Activated naive CD4-positive, alpha-beta T cell treated with anti-CD3 and anti-CD28 coated beads for 36 hours (primary cell): ENCODE measurements at regions of chr18 and their contacts with region 1.

Region 1: GRCh38 chr18:11733031-11733430 is 44.0 kb downstream of the GNAL start:
- DNase-seq: peak; percentile 79
- H3K4me3 Mint-ChIP-seq: no peak overlapping the region
- H3K27ac Mint-ChIP-seq: no peak overlapping the region
- H3K4me1 Mint-ChIP-seq: peaks cover 2% of the 10 kb centered on the region
- H3K27me3 Mint-ChIP-seq: peaks cover 20% of the 10 kb centered on the region

Region 2: GRCh38 chr18:11654736-11655605 is 78.1 kb before region 1 on chr18:
- CTCF ChIA-PET with region 1: interaction called, 16 read pairs
- intact Hi-C with region 1: loop called (anchors 1 kb)
- DNase-seq: peak; percentile 71
- H3K4me3 Mint-ChIP-seq: no peak overlapping the region
- H3K27ac Mint-ChIP-seq: no peak overlapping the region
- H3K4me1 Mint-ChIP-seq: peaks cover 6% of the 10 kb centered on the region
- H3K27me3 Mint-ChIP-seq: peaks cover 39% of the 10 kb centered on the region

Region 3: DNA sequence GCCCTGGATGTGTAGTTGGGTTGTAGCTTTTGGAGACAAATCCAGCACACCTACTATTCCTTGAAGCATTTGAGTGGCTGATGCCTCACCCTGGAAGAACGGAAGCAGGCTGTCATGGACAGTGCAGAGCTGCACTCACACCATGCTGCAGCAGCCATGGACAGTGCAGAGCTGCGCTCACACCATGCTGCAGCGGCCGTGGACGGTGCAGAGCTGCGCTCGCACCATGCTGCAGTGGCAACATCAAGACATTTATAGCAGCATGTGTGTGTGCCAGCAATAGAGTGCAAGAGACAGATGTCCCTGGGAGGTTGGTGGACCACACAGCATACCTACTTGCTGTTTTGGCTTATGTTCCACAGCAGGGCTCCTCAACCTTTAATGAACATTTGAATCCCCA is 13.4 kb before region 1 on chr18:
- CTCF ChIA-PET with region 1: interaction called, 11 read pairs
- intact Hi-C with region 1: no loop called
- DNase-seq: no peak
- H3K4me3 Mint-ChIP-seq: no peak overlapping the region
- H3K27ac Mint-ChIP-seq: no peak overlapping the region
- H3K4me1 Mint-ChIP-seq: peaks cover 2% of the 10 kb centered on the region
- H3K27me3 Mint-ChIP-seq: peaks cover under 1% of the 10 kb centered on the region

Region 4: DNA sequence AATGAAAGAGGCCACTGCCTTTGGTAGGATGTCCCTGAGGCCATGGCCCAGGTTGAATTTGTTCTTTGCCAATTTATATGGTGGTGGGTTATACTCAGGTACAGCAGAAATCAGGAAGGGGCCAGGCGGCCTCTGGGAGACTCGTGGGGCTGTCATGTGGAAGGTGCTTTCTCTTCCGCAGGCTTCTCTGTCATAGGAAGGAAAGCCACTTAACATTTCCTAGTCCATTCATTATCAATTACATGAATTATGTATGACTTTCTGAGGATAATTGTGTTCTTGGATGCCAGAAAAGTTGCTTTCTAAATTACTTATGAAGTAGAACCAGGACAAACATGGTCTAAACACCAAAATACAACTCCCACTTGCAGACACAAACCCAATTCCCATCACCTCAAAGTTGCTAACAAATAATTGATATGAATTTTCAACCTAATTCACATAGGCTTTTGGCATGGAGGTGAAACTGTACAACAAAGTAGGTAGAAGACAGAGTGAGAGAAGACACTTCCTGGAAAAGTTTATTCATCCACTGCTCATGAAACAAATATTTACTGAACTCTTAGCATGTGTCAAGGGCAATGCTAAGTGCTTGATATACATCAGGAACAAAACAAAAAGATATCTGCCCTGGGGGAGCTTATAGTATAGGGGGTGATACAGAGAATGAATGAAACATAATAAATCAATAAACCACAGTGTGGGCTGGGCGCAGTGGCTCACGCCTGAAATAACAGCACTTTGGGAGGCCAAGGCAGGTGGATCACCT is 67.7 kb after region 1 on chr18:
- CTCF ChIA-PET with region 1: no interaction called
- intact Hi-C with region 1: no loop called
- DNase-seq: no peak
- H3K4me3 Mint-ChIP-seq: no peak overlapping the region
- H3K27ac Mint-ChIP-seq: no peak overlapping the region
- H3K4me1 Mint-ChIP-seq: no peaks in the 10 kb centered on the region
- H3K27me3 Mint-ChIP-seq: peaks cover 8% of the 10 kb centered on the region

Region 5: DNA sequence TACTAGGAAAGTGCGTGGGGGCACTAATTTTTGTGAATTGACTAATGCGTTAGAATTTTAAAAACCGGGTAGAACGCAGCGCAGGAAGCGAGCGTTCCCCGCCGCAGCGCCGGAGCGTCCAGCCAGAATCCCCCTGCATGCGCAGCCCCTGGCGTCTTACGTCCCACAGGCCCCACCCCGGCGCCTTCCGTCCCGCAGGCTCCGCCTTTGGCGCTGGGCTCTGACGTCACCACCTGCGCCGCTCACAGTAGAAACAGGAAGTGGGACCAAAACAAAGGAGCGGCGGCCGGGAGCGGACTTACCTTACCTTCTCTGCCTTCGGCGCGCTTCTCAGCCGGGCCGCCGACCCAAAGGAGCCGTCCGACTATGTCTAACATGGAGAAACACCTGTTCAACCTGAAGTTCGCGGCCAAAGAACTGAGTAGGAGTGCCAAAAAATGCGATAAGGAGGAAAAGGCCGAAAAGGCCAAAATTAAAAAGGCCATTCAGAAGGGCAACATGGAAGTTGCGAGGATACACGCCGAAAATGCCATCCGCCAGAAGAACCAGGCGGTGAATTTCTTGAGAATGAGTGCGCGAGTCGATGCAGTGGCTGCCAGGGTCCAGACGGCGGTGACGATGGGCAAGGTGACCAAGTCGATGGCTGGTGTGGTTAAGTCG is 118.2 kb after region 1 on chr18 and contains the start of gene CHMP1B:
- CTCF ChIA-PET with region 1: interaction called, 4 read pairs
- intact Hi-C with region 1: loop called (anchors 1 kb)
- DNase-seq: peak; percentile 98
- H3K4me3 Mint-ChIP-seq: peak within 1 kb of the TSS; percentile 100
- H3K27ac Mint-ChIP-seq: peak within 1 kb of the TSS; percentile 100
- H3K4me1 Mint-ChIP-seq: peaks cover 31% of the 10 kb centered on the region
- H3K27me3 Mint-ChIP-seq: no peaks in the 10 kb centered on the region
- total RNA-seq, gene CHMP1B: 23.2 TPM

Region 6: DNA sequence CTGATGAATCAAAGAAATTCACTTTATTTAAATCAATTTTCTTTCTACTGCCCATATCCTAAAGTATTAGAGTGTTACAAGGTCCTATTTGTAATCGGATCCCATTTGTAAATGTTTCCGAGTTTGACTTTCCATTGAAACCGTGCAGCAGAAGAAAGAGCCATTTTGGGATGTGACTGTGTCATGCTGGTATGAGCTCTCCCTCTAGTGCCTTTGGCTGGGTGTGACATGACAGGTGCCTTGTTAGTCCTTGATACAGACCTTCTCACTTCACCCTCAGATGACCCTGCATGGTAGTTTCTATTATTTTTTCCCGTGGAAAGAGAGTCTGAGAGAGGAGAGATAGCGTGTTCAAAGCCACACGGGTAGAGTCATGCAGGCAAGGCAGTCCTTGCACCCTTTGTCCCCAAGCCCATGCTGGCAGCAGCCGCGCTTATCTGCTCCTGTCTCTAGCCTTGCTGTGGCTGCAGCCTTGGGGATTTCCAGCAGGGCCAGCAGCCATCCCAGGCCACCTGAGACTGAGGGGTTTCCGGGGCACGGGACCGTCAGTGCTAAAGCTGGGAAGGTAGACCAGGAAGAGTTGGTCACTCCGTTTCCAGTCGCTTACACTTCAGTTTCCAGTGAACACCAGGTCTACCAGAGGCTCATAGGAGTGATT is 139.6 kb after region 1 on chr18:
- CTCF ChIA-PET with region 1: interaction called, 3 read pairs
- intact Hi-C with region 1: loop called (anchors 1 kb)
- DNase-seq: peak; percentile 33
- H3K4me3 Mint-ChIP-seq: no peak overlapping the region
- H3K27ac Mint-ChIP-seq: no peak overlapping the region
- H3K4me1 Mint-ChIP-seq: no peaks in the 10 kb centered on the region
- H3K27me3 Mint-ChIP-seq: peaks cover 4% of the 10 kb centered on the region

Region 7: GRCh38 chr18:11995445-11996189 is 262.6 kb after region 1 on chr18:
- CTCF ChIA-PET with region 1: interaction called, 9 read pairs
- intact Hi-C with region 1: loop called (anchors 1 kb)
- DNase-seq: peak; percentile 74
- H3K4me3 Mint-ChIP-seq: no peak overlapping the region
- H3K27ac Mint-ChIP-seq: no peak overlapping the region
- H3K4me1 Mint-ChIP-seq: peaks cover 8% of the 10 kb centered on the region
- H3K27me3 Mint-ChIP-seq: no peaks in the 10 kb centered on the region

Region 8: GRCh38 chr18:12038639-12039417 is 305.8 kb after region 1 on chr18:
- CTCF ChIA-PET with region 1: interaction called, 14 read pairs
- intact Hi-C with region 1: loop called (anchors 1 kb)
- DNase-seq: peak; percentile 76
- H3K4me3 Mint-ChIP-seq: peak overlapping the region; percentile 48
- H3K27ac Mint-ChIP-seq: no peak overlapping the region
- H3K4me1 Mint-ChIP-seq: peaks cover 10% of the 10 kb centered on the region
- H3K27me3 Mint-ChIP-seq: peaks cover 5% of the 10 kb centered on the region